CD8-positive, alpha-beta T cell (primary cell): ENCODE measurements at regions of chr6 and their contacts with region 1.

Region 1: GRCh38 chr6:42563697-42564505 is at the start of gene UBR2:
- DNase-seq: peak; percentile 82 to 98 (median 91)
- ATAC-seq: peak; percentile 95
- H3K4me3 ChIP-seq: peak within 1 kb of the TSS; percentile 95 to 99
- H3K4me3 Mint-ChIP-seq: peak within 1 kb of the TSS; percentile 93
- H3K27ac ChIP-seq: peak within 1 kb of the TSS; percentile 91 to 96
- H3K27ac Mint-ChIP-seq: peak within 1 kb of the TSS; percentile 94
- H3K4me1 ChIP-seq: peaks cover 25% of the 10 kb centered on the region
- H3K4me1 Mint-ChIP-seq: peaks cover 35% of the 10 kb centered on the region
- H3K27me3 ChIP-seq: no peaks in the 10 kb centered on the region
- H3K27me3 Mint-ChIP-seq: peaks cover 2% of the 10 kb centered on the region
- CTCF ChIP-seq: peak; percentile 27
- total RNA-seq, gene UBR2: 22.0 to 22.8 TPM

Region 2: DNA sequence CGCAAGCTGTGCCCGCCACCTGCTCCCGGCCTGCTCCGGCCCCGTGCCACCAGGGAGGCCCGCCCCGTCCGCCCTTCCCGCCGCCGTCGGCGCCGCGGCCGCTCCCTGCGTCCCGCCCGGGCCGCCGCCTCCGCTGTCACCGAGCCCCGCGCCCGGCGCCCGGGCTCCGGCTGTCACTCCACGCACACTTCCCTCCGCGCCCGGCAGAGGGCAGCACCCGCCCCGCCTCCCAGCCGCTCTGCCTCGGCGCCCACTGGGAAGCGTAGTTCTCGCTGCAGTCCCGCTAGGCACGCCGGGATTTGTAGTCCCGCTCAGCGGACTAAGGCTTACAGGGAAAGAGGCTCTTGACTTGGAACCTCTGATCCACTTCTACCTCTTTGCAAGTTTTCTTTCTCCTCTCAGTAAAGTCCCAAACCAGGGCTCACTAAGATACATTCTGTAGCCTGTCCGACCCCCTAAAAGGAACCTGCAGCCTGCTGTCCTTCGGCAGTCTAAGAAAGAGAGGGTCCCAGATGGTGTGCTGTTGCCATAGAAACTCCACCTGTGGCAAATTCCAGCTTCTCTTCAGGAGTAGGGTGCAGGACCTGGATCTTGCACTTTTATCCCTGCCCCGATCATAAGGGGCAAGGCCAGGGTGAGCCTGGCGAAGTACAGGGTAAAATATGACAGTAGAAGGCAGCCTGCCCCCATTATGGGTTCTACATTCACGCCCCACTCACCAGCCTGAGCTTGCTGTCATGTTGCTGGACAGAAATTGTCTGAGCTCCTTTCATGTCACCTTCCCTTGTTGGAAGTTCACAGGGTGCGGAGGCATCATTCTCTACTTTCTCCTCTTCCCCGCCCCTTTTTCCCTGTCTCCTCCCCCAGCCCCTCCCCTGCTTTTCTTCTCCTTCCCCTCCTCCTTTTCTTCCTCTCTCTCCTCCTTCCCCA is 828.2 kb before region 1 on chr6 and contains the start of gene TFEB:
- CTCF ChIA-PET with region 1: no interaction called
- POLR2A ChIA-PET with region 1: interaction called, 3 read pairs
- intact Hi-C with region 1: loop called (anchors 1 to 2 kb)
- DNase-seq: peak; percentile 87 to 96 (median 94)
- ATAC-seq: peak; percentile 68
- H3K4me3 ChIP-seq: peak within 1 kb of the TSS; percentile 73 to 75
- H3K4me3 Mint-ChIP-seq: peak within 1 kb of the TSS; percentile 88
- H3K27ac ChIP-seq: peak within 1 kb of the TSS; percentile 48 to 83
- H3K27ac Mint-ChIP-seq: peak within 1 kb of the TSS; percentile 76
- H3K4me1 ChIP-seq: peaks cover 39% of the 10 kb centered on the region
- H3K4me1 Mint-ChIP-seq: peaks cover 33% of the 10 kb centered on the region
- H3K27me3 ChIP-seq: no peaks in the 10 kb centered on the region
- H3K27me3 Mint-ChIP-seq: no peaks in the 10 kb centered on the region
- CTCF ChIP-seq: peak; percentile 67
- total RNA-seq, gene TFEB: 10.2 to 12.7 TPM

Region 3: GRCh38 chr6:41976794-41977484 is 587.0 kb before region 1 on chr6:
- CTCF ChIA-PET with region 1: no interaction called
- POLR2A ChIA-PET with region 1: no interaction called
- intact Hi-C with region 1: no loop called
- DNase-seq: no peak
- ATAC-seq: peak; percentile 43
- H3K4me3 ChIP-seq: no peak overlapping the region
- H3K4me3 Mint-ChIP-seq: peak overlapping the region; percentile 8
- H3K27ac ChIP-seq: no peak overlapping the region
- H3K27ac Mint-ChIP-seq: peak overlapping the region; percentile 90
- H3K4me1 ChIP-seq: peaks cover 81% of the 10 kb centered on the region
- H3K4me1 Mint-ChIP-seq: peaks cover 69% of the 10 kb centered on the region
- H3K27me3 ChIP-seq: no peaks in the 10 kb centered on the region
- H3K27me3 Mint-ChIP-seq: no peaks in the 10 kb centered on the region
- CTCF ChIP-seq: no peak

Region 4: DNA sequence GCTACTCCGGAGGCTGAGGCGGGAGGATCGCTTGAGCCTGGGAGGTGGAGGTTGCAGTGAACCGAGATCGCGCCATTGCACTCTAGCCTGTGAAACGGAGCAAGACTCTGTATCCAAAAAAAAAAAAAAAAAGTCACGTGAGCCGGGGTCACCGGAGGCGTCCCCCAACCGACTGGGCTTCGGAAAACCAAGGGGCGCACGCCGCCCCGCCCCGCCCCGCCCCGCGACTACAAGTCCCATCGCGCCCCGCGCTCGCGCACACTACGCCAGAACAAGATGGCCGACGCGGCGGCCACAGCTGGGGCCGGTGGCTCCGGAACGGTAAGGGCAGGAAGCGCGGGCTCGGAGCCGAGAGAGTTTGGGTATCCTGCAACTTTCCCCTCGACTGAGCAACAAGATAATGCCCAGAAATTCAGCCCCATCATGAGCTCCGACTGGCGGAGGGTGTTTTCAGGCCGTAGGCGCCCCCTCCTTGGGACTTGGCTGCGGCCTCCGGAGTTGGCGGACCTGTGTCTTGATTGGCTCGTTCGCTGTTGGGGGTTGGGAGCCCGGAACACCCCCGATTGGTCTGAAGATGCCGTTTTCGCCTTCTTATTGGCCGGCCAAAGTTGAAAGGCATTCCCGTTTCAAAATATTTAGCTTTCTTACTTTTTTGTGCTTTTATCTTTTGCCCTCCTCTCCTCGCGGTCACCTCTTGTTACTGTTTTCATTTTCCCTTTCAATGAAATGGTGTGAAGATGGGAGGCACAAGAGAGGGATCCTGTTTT is 513.5 kb before region 1 on chr6 and contains the start of gene TAF8:
- CTCF ChIA-PET with region 1: no interaction called
- POLR2A ChIA-PET with region 1: interaction called, 5 read pairs
- intact Hi-C with region 1: loop called (anchors 1 to 5 kb)
- DNase-seq: peak; percentile 72 to 94 (median 89)
- ATAC-seq: peak; percentile 57
- H3K4me3 ChIP-seq: peak within 1 kb of the TSS; percentile 98 to 99
- H3K4me3 Mint-ChIP-seq: peak within 1 kb of the TSS; percentile 95
- H3K27ac ChIP-seq: peak within 1 kb of the TSS; percentile 80 to 89
- H3K27ac Mint-ChIP-seq: peak within 1 kb of the TSS; percentile 97
- H3K4me1 ChIP-seq: peaks cover 39% of the 10 kb centered on the region
- H3K4me1 Mint-ChIP-seq: peaks cover 66% of the 10 kb centered on the region
- H3K27me3 ChIP-seq: no peaks in the 10 kb centered on the region
- H3K27me3 Mint-ChIP-seq: no peaks in the 10 kb centered on the region
- CTCF ChIP-seq: no peak
- total RNA-seq, gene TAF8: 24.6 to 33.3 TPM

Region 5: DNA sequence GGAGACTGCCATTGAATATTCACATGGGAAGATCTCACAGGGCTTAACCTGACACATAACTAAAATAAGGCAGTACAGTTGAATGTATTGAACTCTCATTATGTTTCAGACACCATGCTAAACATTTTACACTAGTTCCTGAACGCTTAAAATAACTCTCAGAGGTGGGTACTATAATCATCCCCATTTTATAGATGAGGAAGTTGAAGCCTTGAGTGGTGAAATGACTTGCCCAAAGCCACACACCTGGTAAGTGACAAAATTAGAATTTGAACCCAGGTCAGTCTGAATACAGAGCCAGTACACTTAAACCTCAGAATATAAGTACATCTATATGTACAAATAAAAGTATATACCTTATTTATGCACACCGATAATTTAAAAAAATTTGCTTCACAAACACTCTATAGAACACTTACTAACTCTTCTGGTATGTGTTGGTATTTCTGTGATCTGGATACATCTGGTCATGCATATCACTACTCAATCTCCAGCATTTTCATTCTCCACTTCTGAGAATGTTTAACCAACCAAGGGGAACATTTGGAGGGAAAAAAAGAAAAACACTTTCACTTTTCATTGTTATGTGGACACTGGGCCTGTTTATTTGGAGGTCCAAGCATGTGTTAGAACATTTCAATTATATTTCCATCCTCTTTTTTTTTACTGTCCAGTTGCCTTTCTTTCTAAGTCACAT is 213.4 kb after region 1 on chr6:
- CTCF ChIA-PET with region 1: no interaction called
- POLR2A ChIA-PET with region 1: interaction called, 6 read pairs
- intact Hi-C with region 1: loop called in 1 of 2 experiments (anchors 10 kb)
- DNase-seq: no peak
- ATAC-seq: no peak
- H3K4me3 ChIP-seq: no peak overlapping the region
- H3K4me3 Mint-ChIP-seq: no peak overlapping the region
- H3K27ac ChIP-seq: peak overlapping the region in 1 of 2 experiments; percentile 43
- H3K27ac Mint-ChIP-seq: peak overlapping the region; percentile 72
- H3K4me1 ChIP-seq: peaks cover 65% of the 10 kb centered on the region
- H3K4me1 Mint-ChIP-seq: peaks cover 66% of the 10 kb centered on the region
- H3K27me3 ChIP-seq: no peaks in the 10 kb centered on the region
- H3K27me3 Mint-ChIP-seq: no peaks in the 10 kb centered on the region
- CTCF ChIP-seq: no peak

Region 6: DNA sequence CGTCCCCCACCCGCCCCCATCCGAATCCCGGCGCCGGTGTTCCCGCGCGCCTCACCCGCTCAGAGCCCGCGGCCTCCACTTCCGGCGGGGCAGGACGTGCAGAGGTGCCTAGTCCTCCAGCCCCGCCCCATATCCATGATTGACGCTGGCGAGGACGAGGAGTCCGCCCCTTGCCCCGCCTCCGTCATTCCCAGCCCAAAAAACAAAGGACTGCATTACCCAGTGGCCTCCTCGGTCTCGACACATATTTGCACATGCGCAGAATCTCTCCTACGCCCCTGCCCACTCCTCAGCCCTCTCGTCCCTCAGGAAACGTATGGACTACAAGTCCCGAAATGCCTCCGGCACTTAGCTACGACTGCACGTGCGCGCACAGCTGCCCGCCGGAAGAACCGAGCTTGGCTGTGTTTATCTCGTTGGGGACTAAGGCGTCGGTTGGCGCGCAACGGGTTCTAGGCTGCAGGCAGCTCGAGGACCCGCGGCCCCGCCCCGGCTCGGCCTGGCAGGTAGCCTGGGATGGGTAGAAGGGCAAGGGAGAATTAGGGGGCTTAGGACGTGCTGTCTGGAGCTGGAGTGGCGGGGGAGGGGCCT is 450.0 kb after region 1 on chr6 and contains the starts of genes KLHDC3 and MEA1:
- CTCF ChIA-PET with region 1: no interaction called
- POLR2A ChIA-PET with region 1: no interaction called
- intact Hi-C with region 1: loop called (anchors 1 to 5 kb)
- DNase-seq: peak; percentile 95 to 100 (median 98)
- ATAC-seq: peak; percentile 96
- H3K4me3 ChIP-seq: peak within 1 kb of the TSS; percentile 79 to 84
- H3K4me3 Mint-ChIP-seq: peak within 1 kb of the TSS; percentile 95
- H3K27ac ChIP-seq: peak within 1 kb of the TSS; percentile 60 to 74
- H3K27ac Mint-ChIP-seq: peak within 1 kb of the TSS; percentile 94
- H3K4me1 ChIP-seq: peaks cover 29% of the 10 kb centered on the region
- H3K4me1 Mint-ChIP-seq: peaks cover 63% of the 10 kb centered on the region
- H3K27me3 ChIP-seq: no peaks in the 10 kb centered on the region
- H3K27me3 Mint-ChIP-seq: no peaks in the 10 kb centered on the region
- CTCF ChIP-seq: no peak
- total RNA-seq, gene KLHDC3: 20.9 to 21.7 TPM
- total RNA-seq, gene MEA1: 14.5 to 15.3 TPM

Region 7: GRCh38 chr6:43516697-43517504 is 953.0 kb after region 1 on chr6 and contains the starts of genes POLR1C and YIPF3:
- CTCF ChIA-PET with region 1: no interaction called
- POLR2A ChIA-PET with region 1: no interaction called
- intact Hi-C with region 1: loop called (anchors 2 to 5 kb)
- DNase-seq: peak; percentile 90 to 98 (median 97)
- ATAC-seq: peak; percentile 96
- H3K4me3 ChIP-seq: peak within 1 kb of the TSS; percentile 91 to 98
- H3K4me3 Mint-ChIP-seq: no peak within 1 kb of the TSS
- H3K27ac ChIP-seq: peak within 1 kb of the TSS; percentile 83 to 94
- H3K27ac Mint-ChIP-seq: no peak within 1 kb of the TSS
- H3K4me1 ChIP-seq: peaks cover 34% of the 10 kb centered on the region
- H3K4me1 Mint-ChIP-seq: peaks cover 33% of the 10 kb centered on the region
- H3K27me3 ChIP-seq: no peaks in the 10 kb centered on the region
- H3K27me3 Mint-ChIP-seq: no peaks in the 10 kb centered on the region
- CTCF ChIP-seq: no peak
- total RNA-seq, gene POLR1C: 73.9 to 74.0 TPM
- total RNA-seq, gene YIPF3: 51.0 to 52.5 TPM